PC-9 (cell line): ENCODE measurements at regions of chr18 and their contacts with region 1.

Region 1: GRCh38 chr18:59988098-59988706 is 88.4 kb downstream of the PMAIP1 start:
- DNase-seq: peak; percentile 19 to 50
- H3K4me3 ChIP-seq: no peak overlapping the region
- H3K27ac ChIP-seq: no peak overlapping the region
- H3K4me1 ChIP-seq: peaks cover 18% of the 10 kb centered on the region
- H3K27me3 ChIP-seq: no peaks in the 10 kb centered on the region
- CTCF ChIP-seq: peak; percentile 97

Region 2: GRCh38 chr18:59837586-59837985 is 150.6 kb before region 1 on chr18:
- CTCF ChIA-PET with region 1: no interaction called
- POLR2A ChIA-PET with region 1: no interaction called
- intact Hi-C with region 1: loop called (anchors 2 kb)
- DNase-seq: peak; percentile 38 to 62
- H3K4me3 ChIP-seq: no peak overlapping the region
- H3K27ac ChIP-seq: no peak overlapping the region
- H3K4me1 ChIP-seq: no peaks in the 10 kb centered on the region
- H3K27me3 ChIP-seq: no peaks in the 10 kb centered on the region
- CTCF ChIP-seq: peak; percentile 93

Region 3: GRCh38 chr18:59899298-59900221 is 88.6 kb before region 1 on chr18 and contains the start of gene PMAIP1:
- CTCF ChIA-PET with region 1: no interaction called
- POLR2A ChIA-PET with region 1: interaction called, 8 read pairs
- intact Hi-C with region 1: loop called (anchors 5 kb)
- DNase-seq: peak; percentile 82 to 88
- H3K4me3 ChIP-seq: peak within 1 kb of the TSS; percentile 90
- H3K27ac ChIP-seq: peak within 1 kb of the TSS; percentile 92
- H3K4me1 ChIP-seq: peaks cover 43% of the 10 kb centered on the region
- H3K27me3 ChIP-seq: no peaks in the 10 kb centered on the region
- CTCF ChIP-seq: no peak
- total RNA-seq, gene PMAIP1: 16.5 and 17.0 TPM in 2 replicates

Region 4: GRCh38 chr18:59923539-59924196 is 64.5 kb before region 1 on chr18:
- CTCF ChIA-PET with region 1: no interaction called
- POLR2A ChIA-PET with region 1: no interaction called
- intact Hi-C with region 1: loop called (anchors 2 kb)
- DNase-seq: no peak
- H3K4me3 ChIP-seq: peak overlapping the region; percentile 7; the same call in 1 of the 2 replicates
- H3K27ac ChIP-seq: peak overlapping the region; percentile 89
- H3K4me1 ChIP-seq: peaks cover 59% of the 10 kb centered on the region
- H3K27me3 ChIP-seq: no peaks in the 10 kb centered on the region
- CTCF ChIP-seq: no peak

Region 5: GRCh38 chr18:59940068-59940467 is 48.1 kb before region 1 on chr18:
- CTCF ChIA-PET with region 1: no interaction called
- POLR2A ChIA-PET with region 1: no interaction called
- intact Hi-C with region 1: no loop called
- DNase-seq: no peak
- H3K4me3 ChIP-seq: no peak overlapping the region
- H3K27ac ChIP-seq: no peak overlapping the region
- H3K4me1 ChIP-seq: no peaks in the 10 kb centered on the region
- H3K27me3 ChIP-seq: no peaks in the 10 kb centered on the region
- CTCF ChIP-seq: no peak

Region 6: DNA sequence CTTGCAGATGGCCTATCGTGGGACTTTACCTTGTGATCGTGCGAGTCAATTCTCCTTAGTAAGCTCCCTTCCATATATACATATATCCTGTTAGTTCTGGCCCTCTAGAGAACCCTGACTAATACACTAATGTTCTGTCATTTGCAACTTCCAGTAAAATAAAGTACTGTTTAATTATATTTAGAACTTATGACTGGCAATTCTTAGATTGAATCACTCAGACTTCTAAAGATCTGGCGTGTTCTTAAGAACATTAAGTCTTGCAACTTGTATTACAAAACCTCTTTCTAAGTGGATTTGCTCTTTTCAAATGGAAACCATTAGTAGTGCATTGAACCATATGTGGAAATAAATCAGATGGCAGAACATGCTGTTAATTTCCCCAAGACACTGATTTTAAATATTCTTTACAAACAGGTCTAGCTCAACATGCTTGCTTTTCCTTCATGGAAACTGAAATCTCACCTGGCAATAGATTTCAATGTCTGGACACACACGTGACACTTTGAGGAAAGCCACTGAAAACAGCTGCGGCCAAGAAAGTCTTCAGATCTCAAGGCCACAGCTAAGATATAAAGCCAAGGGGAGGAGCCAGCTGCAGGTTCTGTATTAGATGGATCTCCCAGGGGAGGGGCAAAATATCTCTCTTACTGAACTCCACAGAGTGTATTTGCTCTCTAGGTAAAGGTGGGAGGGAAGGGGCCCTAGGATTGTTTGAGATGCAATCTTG is 37.8 kb before region 1 on chr18:
- CTCF ChIA-PET with region 1: no interaction called
- POLR2A ChIA-PET with region 1: no interaction called
- intact Hi-C with region 1: loop called (anchors 2 kb)
- DNase-seq: no peak
- H3K4me3 ChIP-seq: no peak overlapping the region
- H3K27ac ChIP-seq: peak overlapping the region; percentile 91; the same call in 1 of the 2 replicates
- H3K4me1 ChIP-seq: peaks cover 50% of the 10 kb centered on the region
- H3K27me3 ChIP-seq: no peaks in the 10 kb centered on the region
- CTCF ChIP-seq: no peak

Region 7: GRCh38 chr18:60019463-60019840 is 31.2 kb after region 1 on chr18:
- CTCF ChIA-PET with region 1: no interaction called
- POLR2A ChIA-PET with region 1: no interaction called
- intact Hi-C with region 1: no loop called
- DNase-seq: peak in 1 of 2 experiments; percentile 54
- H3K4me3 ChIP-seq: no peak overlapping the region
- H3K27ac ChIP-seq: no peak overlapping the region
- H3K4me1 ChIP-seq: no peaks in the 10 kb centered on the region
- H3K27me3 ChIP-seq: no peaks in the 10 kb centered on the region
- CTCF ChIP-seq: no peak

Region 8: DNA sequence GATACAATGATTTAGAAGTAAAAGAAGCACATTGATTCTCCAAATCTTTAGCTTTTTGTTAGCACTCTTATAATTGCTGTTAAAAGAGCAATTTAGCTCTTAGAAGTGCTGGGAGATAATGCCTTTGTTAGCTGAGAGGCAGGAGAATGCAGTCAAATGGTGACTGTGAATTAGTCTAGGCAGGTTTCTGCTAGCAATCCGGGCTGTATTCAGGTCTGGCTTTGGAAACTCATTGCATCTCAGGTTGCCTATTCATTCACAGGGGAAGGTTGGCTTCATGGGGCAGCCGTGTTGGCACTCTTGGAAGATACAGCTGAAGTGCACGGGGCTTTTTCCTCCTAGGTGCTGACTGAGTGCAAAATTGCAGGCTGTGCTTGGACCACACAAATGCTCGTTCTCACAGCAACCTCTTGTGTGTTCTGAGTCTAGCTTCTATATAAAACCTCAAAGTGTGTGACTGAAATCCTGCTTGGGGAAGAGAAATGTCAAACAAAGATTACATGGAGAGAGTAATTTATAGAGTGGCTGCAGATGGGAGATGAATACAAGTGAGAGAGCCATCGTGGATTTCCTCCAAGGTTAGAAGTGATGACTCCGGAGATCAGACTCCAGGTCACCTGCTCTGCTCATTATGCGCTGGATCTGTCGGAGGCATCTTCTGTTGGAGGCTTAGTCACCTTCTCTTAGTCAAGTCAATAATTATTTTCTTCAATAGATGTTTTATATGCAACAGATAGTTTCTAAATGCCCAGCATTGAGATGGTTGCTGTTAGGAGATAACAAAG is 79.4 kb after region 1 on chr18:
- CTCF ChIA-PET with region 1: no interaction called
- POLR2A ChIA-PET with region 1: no interaction called
- intact Hi-C with region 1: no loop called
- DNase-seq: no peak
- H3K4me3 ChIP-seq: no peak overlapping the region
- H3K27ac ChIP-seq: no peak overlapping the region
- H3K4me1 ChIP-seq: no peaks in the 10 kb centered on the region
- H3K27me3 ChIP-seq: no peaks in the 10 kb centered on the region
- CTCF ChIP-seq: no peak

Region 9: DNA sequence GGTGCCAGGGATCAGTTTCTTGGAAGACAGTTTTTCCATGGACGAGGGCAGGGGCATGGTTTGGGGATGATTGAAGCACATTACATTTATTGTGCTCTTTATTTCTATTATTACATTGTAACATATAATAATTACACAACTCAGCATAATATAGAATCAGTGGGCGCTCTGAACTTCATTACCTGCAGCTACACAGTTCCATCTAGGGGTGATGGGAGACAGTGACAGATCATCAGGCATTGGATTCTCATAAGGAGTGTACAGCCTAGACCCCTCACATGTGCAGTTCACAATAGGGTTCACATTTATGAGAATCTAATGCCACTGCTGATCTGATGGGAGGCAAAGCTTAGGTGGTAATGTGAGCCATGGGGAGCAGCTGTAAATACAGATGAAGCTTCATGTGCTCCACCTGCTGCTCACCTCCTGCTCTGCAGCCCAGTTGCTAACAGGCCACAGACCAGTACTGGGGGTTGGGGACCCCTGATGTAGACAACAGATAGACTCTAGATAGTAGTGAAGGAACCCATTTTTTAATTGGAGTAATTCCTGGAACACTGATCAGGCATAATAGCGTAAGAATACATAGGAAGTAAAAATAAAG is 425.8 kb after region 1 on chr18:
- CTCF ChIA-PET with region 1: interaction called, 3 read pairs
- POLR2A ChIA-PET with region 1: no interaction called
- intact Hi-C with region 1: loop called (anchors 5 kb)
- DNase-seq: peak in 1 of 2 experiments; percentile 3
- H3K4me3 ChIP-seq: no peak overlapping the region
- H3K27ac ChIP-seq: no peak overlapping the region
- H3K4me1 ChIP-seq: no peaks in the 10 kb centered on the region
- H3K27me3 ChIP-seq: no peaks in the 10 kb centered on the region
- CTCF ChIP-seq: peak; percentile 68

Region 10: GRCh38 chr18:61502472-61502871 is 1514.3 kb after region 1 on chr18:
- CTCF ChIA-PET with region 1: no interaction called
- POLR2A ChIA-PET with region 1: no interaction called
- intact Hi-C with region 1: loop called (anchors 10 kb)
- DNase-seq: peak in 1 of 2 experiments; percentile 3
- H3K4me3 ChIP-seq: no peak overlapping the region
- H3K27ac ChIP-seq: no peak overlapping the region
- H3K4me1 ChIP-seq: no peaks in the 10 kb centered on the region
- H3K27me3 ChIP-seq: no peaks in the 10 kb centered on the region
- CTCF ChIP-seq: peak; percentile 72